ENCODE measurements at regions of chr13 and their contacts with region 1.

Region 1: DNA sequence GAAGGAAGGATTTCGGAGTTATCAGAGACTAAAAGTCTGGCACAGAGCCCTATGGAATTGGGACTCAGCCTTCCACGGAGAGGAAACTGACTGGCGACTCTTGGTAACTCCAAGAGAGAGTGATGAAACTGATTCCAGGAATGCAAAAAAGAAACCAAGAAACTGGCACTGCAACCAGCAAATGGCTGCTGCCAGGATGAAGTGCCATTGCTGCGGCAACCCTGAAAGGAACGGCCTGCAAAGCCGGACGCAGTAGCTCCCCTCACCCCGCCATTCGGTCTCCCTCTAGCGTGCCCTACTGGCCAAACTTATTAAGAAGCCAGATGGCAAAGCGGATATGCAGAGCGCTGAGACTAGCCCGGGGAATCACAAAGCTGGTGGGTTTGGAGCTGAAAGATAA is 236.0 kb downstream of the PCDH9 start:
- DNase-seq: peak; percentile 83
- ATAC-seq: peak; percentile 100
- H3K4me3 Mint-ChIP-seq: peak overlapping the region; percentile 23
- H3K27ac Mint-ChIP-seq: no peak overlapping the region
- H3K4me1 Mint-ChIP-seq: peaks cover 13% of the 10 kb centered on the region
- H3K27me3 Mint-ChIP-seq: no peaks in the 10 kb centered on the region
- CTCF ChIP-seq: peak; percentile 66

Region 2: GRCh38 chr13:66875264-66875663 is 118.8 kb before region 1 on chr13:
- CTCF ChIA-PET with region 1: no interaction called
- POLR2A ChIA-PET with region 1: no interaction called
- DNase-seq: no peak
- ATAC-seq: no peak
- H3K4me3 Mint-ChIP-seq: no peak overlapping the region
- H3K27ac Mint-ChIP-seq: no peak overlapping the region
- H3K4me1 Mint-ChIP-seq: no peaks in the 10 kb centered on the region
- H3K27me3 Mint-ChIP-seq: no peaks in the 10 kb centered on the region
- CTCF ChIP-seq: no peak

Region 3: GRCh38 chr13:66895320-66895719 is 98.8 kb before region 1 on chr13:
- CTCF ChIA-PET with region 1: no interaction called
- POLR2A ChIA-PET with region 1: no interaction called
- DNase-seq: no peak
- ATAC-seq: no peak
- H3K4me3 Mint-ChIP-seq: no peak overlapping the region
- H3K27ac Mint-ChIP-seq: no peak overlapping the region
- H3K4me1 Mint-ChIP-seq: no peaks in the 10 kb centered on the region
- H3K27me3 Mint-ChIP-seq: no peaks in the 10 kb centered on the region
- CTCF ChIP-seq: no peak

Region 4: DNA sequence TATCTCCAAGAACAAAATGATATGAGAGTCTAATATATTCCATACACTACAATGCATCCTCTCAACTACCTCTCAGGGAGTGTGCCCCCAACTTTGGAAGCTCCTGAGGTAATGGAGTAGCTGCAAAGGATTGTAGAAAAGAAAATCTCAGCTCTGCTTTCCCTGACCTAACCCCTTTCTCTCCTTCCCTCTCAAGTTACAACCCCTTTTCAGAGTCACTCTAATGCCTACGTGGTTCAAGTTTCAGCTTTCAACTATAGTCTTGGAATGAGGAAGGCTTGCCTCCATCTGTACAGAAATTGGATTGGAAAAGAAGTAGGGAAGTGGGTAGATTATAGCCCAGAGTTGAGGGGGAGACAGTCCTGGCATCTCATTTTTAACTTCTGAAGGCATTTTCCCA is 19.9 kb before region 1 on chr13:
- CTCF ChIA-PET with region 1: interaction called, 13 read pairs
- POLR2A ChIA-PET with region 1: no interaction called
- DNase-seq: no peak
- ATAC-seq: peak; percentile 76
- H3K4me3 Mint-ChIP-seq: no peak overlapping the region
- H3K27ac Mint-ChIP-seq: no peak overlapping the region
- H3K4me1 Mint-ChIP-seq: peaks cover 23% of the 10 kb centered on the region
- H3K27me3 Mint-ChIP-seq: no peaks in the 10 kb centered on the region
- CTCF ChIP-seq: no peak

Region 5: DNA sequence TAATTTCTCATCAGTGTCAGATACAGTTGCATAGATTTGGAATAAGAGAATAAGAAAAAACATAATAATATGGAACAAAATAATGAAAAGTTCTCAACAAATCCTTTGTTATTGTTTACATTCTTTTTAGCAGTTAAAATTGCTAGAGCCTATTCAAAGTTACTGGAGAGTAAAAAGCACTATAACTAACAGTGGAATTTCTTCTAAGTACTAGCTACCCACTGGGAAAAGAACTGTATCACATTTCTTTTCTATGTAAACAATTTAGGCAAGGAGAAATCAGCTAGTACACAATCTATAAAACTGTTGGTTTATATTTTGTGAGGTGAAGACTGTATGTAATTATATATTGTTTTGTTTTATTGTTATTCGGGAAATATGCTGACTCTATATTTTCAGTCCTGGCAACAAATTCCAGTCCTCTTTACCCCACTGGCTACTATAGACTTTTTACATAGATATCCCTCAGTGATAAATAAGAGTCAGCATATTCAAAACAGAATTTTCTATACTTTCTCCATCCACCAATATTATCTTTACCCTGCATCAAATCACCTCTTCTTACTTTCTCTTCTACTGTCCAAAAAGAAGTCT is 14.1 kb after region 1 on chr13:
- CTCF ChIA-PET with region 1: interaction called, 19 read pairs
- POLR2A ChIA-PET with region 1: no interaction called
- DNase-seq: no peak
- ATAC-seq: no peak
- H3K4me3 Mint-ChIP-seq: no peak overlapping the region
- H3K27ac Mint-ChIP-seq: no peak overlapping the region
- H3K4me1 Mint-ChIP-seq: peaks cover 11% of the 10 kb centered on the region
- H3K27me3 Mint-ChIP-seq: no peaks in the 10 kb centered on the region
- CTCF ChIP-seq: no peak

Measured in WTC11 (cell line).